Calu3 (cell line): ENCODE measurements at regions of chr1 and their contacts with region 1.

Region 1: DNA sequence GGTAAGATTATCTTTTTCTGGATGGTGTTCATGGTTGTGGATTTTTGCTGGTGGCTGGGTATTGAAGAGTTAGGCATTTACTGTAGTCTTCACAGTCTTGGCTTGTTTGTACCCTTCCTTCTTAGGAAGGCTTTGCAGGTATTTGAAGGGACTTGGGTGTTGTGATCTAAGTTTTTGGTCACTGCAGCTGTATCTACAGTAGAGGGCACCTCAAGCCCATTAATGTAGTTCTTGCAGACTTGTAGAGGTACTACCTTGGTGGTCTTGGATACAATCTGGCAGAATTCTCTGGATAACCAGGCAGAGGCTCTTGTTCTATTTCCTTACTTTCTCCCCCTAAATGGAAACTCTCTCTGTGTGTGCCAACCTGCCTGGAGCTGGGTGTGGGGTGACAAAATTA is 155.8 kb upstream of the BRINP3 start:
- DNase-seq: no peak
- H3K4me3 Mint-ChIP-seq: no peak overlapping the region
- H3K27ac Mint-ChIP-seq: no peak overlapping the region
- H3K4me1 Mint-ChIP-seq: no peaks in the 10 kb centered on the region
- H3K27me3 Mint-ChIP-seq: no peaks in the 10 kb centered on the region
- CTCF ChIP-seq: no peak

Region 2: DNA sequence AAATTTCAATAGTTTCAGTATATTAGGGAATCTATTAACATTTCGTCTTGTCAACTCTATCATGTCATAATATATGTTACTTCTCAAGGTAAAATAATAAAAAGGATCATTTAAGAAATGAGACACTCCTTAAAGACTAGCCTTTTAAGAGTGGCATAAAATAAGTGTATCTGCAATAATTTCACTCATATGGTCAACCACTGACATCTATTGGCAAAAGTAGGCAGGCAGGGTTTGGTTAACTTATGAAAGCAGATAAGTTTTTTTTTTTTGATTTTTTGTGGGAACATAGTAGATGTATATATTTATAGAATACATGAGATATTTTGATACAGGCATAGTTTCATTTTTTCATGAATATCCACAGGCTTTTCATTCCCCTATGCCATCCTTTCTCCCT is 1677.8 kb after region 1 on chr1:
- CTCF ChIA-PET with region 1: no interaction called
- intact Hi-C with region 1: loop called (anchors 10 kb)
- DNase-seq: peak; percentile 25
- H3K4me3 Mint-ChIP-seq: no peak overlapping the region
- H3K27ac Mint-ChIP-seq: no peak overlapping the region
- H3K4me1 Mint-ChIP-seq: no peaks in the 10 kb centered on the region
- H3K27me3 Mint-ChIP-seq: no peaks in the 10 kb centered on the region
- CTCF ChIP-seq: peak; percentile 36